Left ventricle myocardium inferior (tissue), 1 donor: ENCODE measurements at regions of chr18 and their contacts with region 1.

Region 1: GRCh38 chr18:12645254-12646203 is 12.4 kb downstream of the SPIRE1 start:
- DNase-seq: peak; percentile 55
- H3K4me3 ChIP-seq: peak overlapping the region; percentile 47
- H3K27ac ChIP-seq: peak overlapping the region; percentile 87
- H3K4me1 ChIP-seq: peaks cover 68% of the 10 kb centered on the region
- H3K27me3 ChIP-seq: no peaks in the 10 kb centered on the region
- CTCF ChIP-seq: no peak

Region 2: DNA sequence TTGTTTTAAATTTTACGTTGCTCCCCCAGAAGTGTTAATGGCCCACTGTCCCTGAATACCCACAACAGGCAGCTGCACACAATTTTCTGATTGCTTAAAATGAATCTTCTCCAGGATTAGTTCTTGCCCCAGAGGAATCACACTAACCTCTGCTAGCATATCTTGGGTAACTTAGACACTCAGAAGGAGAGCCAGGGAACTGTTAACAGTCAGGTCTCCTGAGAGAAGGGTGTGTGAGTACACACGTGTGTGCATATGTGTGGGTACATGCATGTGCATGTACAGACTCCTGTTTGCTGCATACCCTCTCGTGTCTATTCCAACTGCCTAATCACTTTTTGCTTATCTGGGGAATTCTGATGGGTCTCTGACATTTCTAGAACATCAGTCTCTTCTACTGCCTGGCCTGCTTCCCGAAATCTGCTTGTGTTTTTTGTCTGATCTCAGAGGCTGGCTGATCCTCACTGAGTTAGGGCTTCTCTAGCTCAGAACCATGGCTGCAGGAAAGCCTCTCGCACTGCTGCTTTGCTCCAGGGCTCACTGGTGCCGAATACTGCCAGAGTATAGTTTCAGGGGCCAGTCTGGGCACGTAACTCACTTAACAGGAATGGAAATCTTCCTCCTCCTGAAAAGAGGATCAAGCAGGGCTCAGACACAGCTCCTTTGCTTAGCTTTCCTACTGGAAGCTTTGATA is 175.0 kb before region 1 on chr18:
- intact Hi-C with region 1: loop called (anchors 10 kb)
- DNase-seq: no peak
- H3K4me3 ChIP-seq: no peak overlapping the region
- H3K27ac ChIP-seq: no peak overlapping the region
- H3K4me1 ChIP-seq: peaks cover 13% of the 10 kb centered on the region
- H3K27me3 ChIP-seq: no peaks in the 10 kb centered on the region
- CTCF ChIP-seq: no peak

Region 3: GRCh38 chr18:12559319-12559718 is 86.2 kb before region 1 on chr18:
- intact Hi-C with region 1: no loop called
- DNase-seq: no peak
- H3K4me3 ChIP-seq: no peak overlapping the region
- H3K27ac ChIP-seq: no peak overlapping the region
- H3K4me1 ChIP-seq: no peaks in the 10 kb centered on the region
- H3K27me3 ChIP-seq: no peaks in the 10 kb centered on the region
- CTCF ChIP-seq: no peak

Region 4: DNA sequence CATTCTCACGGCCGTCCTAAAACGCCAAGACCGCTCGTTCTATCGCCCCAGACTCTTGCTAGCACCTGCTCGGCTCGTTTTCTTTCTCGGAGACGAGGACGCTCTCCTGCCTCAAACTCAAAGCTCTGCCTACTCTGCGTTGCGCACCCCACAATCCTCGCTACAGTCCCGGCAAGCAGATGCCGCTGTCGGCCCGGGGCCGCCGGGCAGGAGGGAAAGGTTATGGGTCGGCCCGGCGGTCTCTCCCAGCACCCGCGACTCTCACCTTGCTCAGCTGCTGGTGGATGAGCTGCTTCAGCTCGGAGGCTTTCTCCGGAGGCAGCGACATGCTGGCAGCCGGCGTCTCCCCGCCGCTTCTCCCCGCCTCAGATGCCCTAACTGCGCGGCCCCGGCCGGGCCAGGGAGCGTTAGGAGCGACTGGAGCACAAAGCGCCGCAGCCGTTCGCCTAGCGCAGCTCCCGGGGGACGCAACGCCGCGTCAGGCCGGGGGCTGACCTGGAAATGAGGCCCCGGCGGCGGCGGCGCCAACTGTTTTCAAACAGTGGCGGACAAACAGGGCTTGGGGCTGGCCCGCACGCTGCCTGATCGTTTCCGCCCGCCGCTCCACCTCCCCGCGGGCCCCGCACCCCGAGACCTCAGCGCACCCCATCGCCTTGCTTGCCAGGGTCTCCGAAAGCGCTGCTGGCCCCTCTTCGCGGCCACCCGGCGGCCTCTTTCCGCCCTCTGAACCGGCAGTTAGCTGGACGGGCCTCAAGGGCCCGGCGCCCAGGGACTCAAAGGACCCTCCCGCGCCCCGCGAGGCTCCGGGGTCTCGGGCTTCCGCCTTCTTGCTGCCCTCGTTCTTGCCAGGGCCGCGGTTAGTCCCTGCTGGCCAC is 56.9 kb after region 1 on chr18 and contains the starts of genes CEP76 and PSMG2:
- intact Hi-C with region 1: no loop called
- DNase-seq: peak; percentile 94
- H3K4me3 ChIP-seq: peak within 1 kb of the TSS; percentile 88
- H3K27ac ChIP-seq: peak within 1 kb of the TSS; percentile 99
- H3K4me1 ChIP-seq: peaks cover 53% of the 10 kb centered on the region
- H3K27me3 ChIP-seq: no peaks in the 10 kb centered on the region
- CTCF ChIP-seq: no peak
- total RNA-seq, gene CEP76: 3.7 TPM
- total RNA-seq, gene PSMG2: 39.5 TPM

Region 5: GRCh38 chr18:12883684-12884405 is 238.3 kb after region 1 on chr18 and contains the start of gene PTPN2:
- intact Hi-C with region 1: no loop called
- DNase-seq: peak; percentile 94
- H3K4me3 ChIP-seq: peak within 1 kb of the TSS; percentile 88
- H3K27ac ChIP-seq: peak within 1 kb of the TSS; percentile 100
- H3K4me1 ChIP-seq: peaks cover 49% of the 10 kb centered on the region
- H3K27me3 ChIP-seq: no peaks in the 10 kb centered on the region
- CTCF ChIP-seq: no peak
- total RNA-seq, gene PTPN2: 11.0 TPM